Activated CD8-positive, alpha-beta T cell treated with anti-CD3 and anti-CD28 coated beads for 36 hours (primary cell): ENCODE measurements at regions of chr15 and their contacts with region 1.

Region 1: DNA sequence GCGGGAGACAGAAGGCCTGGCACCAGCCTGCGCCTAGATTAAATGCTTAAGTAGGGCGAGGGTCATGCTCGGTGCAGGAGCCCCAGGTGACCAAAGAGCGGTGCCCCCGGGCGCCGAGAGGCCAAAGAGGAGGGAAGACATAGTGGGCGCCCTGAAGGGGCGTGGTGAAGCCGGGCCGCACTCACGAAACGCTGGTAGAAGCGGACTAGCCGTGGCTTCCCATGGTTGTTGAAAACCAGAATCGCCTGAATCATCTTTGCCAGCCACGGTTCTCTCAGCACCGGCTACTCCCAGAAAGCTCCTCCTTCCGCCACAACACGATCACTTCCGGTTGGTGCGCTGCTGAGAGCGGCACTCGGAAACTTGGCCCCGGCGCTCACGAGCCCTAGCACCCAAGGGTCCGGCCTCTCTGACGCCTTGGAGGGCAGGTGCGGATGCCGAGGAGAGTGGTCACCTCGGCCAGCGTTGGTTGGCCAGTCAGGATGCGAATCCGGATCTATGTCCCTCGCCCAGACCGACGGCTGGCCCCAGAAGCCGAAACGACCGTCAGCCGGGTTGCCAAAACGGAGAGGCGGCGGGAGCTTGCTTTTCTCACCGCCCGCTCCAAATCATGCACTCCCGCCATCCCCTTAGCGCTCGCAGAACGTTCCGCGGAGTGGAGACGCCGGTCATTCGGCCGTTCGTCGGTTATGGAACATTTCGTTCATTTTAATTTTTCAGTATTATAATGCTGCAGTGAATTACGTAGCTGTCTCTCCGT is at the start of gene AP3S2:
- DNase-seq: peak; percentile 93
- ATAC-seq: peak; percentile 95
- H3K4me3 Mint-ChIP-seq: peak within 1 kb of the TSS; percentile 100
- H3K27ac Mint-ChIP-seq: peak within 1 kb of the TSS; percentile 99
- H3K4me1 Mint-ChIP-seq: peaks cover 28% of the 10 kb centered on the region
- H3K27me3 Mint-ChIP-seq: no peaks in the 10 kb centered on the region
- CTCF ChIP-seq: no peak
- total RNA-seq, gene AP3S2: 20.3 to 23.0 TPM

Region 2: GRCh38 chr15:89794627-89795241 is 99.1 kb before region 1 on chr15:
- CTCF ChIA-PET with region 1: no interaction called
- POLR2A ChIA-PET with region 1: no interaction called
- intact Hi-C with region 1: no loop called
- DNase-seq: no peak
- ATAC-seq: no peak
- H3K4me3 Mint-ChIP-seq: no peak overlapping the region
- H3K27ac Mint-ChIP-seq: no peak overlapping the region
- H3K4me1 Mint-ChIP-seq: no peaks in the 10 kb centered on the region
- H3K27me3 Mint-ChIP-seq: peaks cover 2% of the 10 kb centered on the region
- CTCF ChIP-seq: no peak

Region 3: GRCh38 chr15:89904519-89904918 is 10.6 kb after region 1 on chr15:
- CTCF ChIA-PET with region 1: interaction called, 5 read pairs
- POLR2A ChIA-PET with region 1: interaction called, 12 read pairs
- intact Hi-C with region 1: no loop called
- DNase-seq: no peak
- ATAC-seq: no peak
- H3K4me3 Mint-ChIP-seq: no peak overlapping the region
- H3K27ac Mint-ChIP-seq: no peak overlapping the region
- H3K4me1 Mint-ChIP-seq: peaks cover 4% of the 10 kb centered on the region
- H3K27me3 Mint-ChIP-seq: peaks cover 3% of the 10 kb centered on the region
- CTCF ChIP-seq: no peak

Region 4: GRCh38 chr15:90001683-90002427 is 108.0 kb after region 1 on chr15:
- CTCF ChIA-PET with region 1: interaction called, 4 read pairs
- POLR2A ChIA-PET with region 1: interaction called, 3 read pairs
- intact Hi-C with region 1: loop called (anchors 10 kb)
- DNase-seq: peak; percentile 72
- ATAC-seq: peak; percentile 47
- H3K4me3 Mint-ChIP-seq: peak overlapping the region; percentile 78
- H3K27ac Mint-ChIP-seq: peak overlapping the region; percentile 89
- H3K4me1 Mint-ChIP-seq: peaks cover 54% of the 10 kb centered on the region
- H3K27me3 Mint-ChIP-seq: no peaks in the 10 kb centered on the region
- CTCF ChIP-seq: no peak

Region 5: DNA sequence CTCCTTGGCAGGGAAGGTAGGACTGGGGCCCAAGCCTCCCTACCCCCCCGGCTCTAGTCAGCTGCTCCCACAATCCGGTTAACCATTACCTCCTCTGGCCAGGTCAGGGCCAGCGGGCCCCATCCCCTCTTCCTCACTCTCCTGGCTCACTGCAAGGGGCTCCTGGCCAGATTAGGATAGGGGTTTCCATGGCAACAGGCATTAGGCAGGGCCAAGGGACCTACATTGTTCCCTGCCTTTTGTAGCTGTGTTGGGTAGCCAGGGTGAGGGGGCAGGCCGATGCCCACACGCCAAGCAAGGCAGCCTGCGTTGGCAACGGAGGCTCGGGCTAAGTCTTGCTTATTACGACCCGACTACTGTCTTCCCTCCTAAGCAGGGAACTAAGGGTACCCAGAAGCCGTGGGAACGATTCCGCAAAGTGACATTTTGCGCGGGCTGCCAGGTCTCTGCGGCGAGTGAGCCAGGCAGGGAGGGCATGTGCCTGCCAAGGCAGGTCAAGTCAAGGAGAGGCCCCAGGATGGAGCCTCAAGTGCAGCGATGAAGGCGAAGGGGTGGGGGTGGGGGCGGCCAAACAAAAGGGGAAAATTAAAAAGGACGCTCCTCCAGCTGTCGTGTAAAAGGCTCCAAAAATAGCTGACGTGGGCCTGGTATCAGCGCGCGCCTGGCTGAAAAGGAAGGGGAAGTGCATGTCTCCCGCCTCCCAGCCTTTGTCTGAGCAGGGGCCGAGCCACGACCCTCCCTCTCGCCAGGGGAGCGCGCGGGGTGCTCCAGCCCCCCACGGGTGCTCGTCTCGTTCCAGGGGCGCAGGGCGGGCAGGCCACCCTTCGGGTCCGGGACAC is 207.5 kb after region 1 on chr15:
- CTCF ChIA-PET with region 1: interaction called, 7 read pairs
- POLR2A ChIA-PET with region 1: interaction called, 14 read pairs
- intact Hi-C with region 1: loop called (anchors 5 kb)
- DNase-seq: peak; percentile 57
- ATAC-seq: no peak
- H3K4me3 Mint-ChIP-seq: peak overlapping the region; percentile 91
- H3K27ac Mint-ChIP-seq: peak overlapping the region; percentile 96
- H3K4me1 Mint-ChIP-seq: peaks cover 54% of the 10 kb centered on the region
- H3K27me3 Mint-ChIP-seq: no peaks in the 10 kb centered on the region
- CTCF ChIP-seq: no peak